CD4-positive, alpha-beta T cell (primary cell): ENCODE measurements at regions of chr4 and their contacts with region 1.

Region 1: DNA sequence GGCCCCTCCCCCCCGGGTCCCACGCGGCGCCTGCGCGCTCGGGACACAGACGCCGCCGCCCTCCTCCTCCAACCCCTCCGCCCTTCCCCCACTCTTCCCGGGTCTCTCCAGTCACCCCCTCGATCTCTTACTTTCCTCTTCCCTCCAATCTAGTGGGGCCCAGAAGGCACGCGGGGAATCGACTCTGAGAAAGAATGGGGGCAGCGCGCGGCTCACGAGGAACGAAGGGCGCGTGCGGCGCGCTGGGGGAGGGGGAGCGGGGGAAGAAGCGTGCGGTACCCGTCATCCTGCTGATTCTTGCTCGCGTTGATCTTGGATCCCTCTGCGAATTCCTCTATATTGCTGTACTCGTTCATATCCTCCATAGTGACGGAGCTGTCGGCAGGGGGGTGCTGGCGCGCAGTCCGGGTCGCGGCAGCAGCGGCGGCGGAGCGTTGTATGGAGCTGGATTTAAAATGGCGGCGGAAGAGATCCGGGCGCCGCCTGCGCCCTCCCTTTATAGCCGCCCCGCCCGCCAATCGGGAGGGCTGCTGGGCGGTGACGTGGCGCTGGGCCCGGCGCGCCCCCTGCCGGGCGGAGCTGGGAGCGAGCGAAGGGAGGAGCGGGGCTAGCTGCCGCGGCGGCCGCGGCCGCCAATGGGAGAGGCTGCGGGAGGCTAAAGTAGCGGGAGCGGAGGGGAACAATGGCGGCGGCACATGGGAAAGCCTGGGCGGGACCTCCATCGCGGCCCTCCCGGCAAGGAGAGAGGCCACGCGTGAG is 1.1 kb downstream of the HNRNPDL start:
- DNase-seq: peak; percentile 87 to 98 (median 94)
- ATAC-seq: peak; percentile 59
- H3K4me3 ChIP-seq: peak overlapping the region; percentile 93
- H3K4me3 Mint-ChIP-seq: peak overlapping the region; percentile 100
- H3K27ac ChIP-seq: peak overlapping the region; percentile 98 to 99
- H3K27ac Mint-ChIP-seq: peak overlapping the region; percentile 99
- H3K4me1 ChIP-seq: peaks cover 36% of the 10 kb centered on the region
- H3K4me1 Mint-ChIP-seq: peaks cover 84% of the 10 kb centered on the region
- H3K27me3 ChIP-seq: no peaks in the 10 kb centered on the region
- H3K27me3 Mint-ChIP-seq: peaks cover 4% of the 10 kb centered on the region
- CTCF ChIP-seq: peak; percentile 91

Region 2: DNA sequence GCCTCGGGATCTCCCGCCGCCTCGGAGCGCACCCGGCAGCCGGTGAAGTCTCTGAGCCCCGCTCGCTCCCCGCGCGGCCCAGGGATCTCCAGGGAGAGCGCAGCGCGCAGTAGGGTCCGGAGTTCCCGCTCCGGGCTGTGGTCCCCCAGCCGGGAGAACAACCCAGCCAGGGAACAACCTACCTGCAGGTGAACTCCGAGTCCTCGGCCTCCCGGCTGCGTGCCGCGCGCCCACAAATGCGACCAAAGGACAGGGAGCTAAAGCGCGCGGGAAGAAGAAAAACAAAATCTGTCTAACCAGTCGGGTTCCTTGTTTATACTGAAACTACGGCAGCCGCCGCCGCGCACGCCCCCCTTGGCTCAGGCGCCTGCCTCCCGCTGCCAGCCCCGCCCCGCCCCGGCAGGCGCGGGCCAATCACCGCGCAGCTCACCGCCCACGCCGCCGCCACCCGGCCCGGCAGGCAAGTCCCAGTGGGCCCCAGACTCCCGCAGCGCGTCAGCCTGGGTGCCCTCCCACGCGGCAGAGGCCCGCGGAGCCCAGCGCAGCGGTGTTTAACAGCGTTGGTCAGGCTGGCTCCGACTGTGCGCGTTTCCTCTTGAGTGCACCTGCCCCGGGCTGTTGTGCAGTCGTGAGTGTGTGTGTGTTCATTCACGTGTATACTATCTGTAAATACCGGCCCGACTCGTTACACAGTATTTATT is 957.4 kb before region 1 on chr4 and contains the start of gene RASGEF1B:
- CTCF ChIA-PET with region 1: no interaction called
- POLR2A ChIA-PET with region 1: interaction called, 14 read pairs
- intact Hi-C with region 1: no loop called
- DNase-seq: peak; percentile 84 to 98 (median 92)
- ATAC-seq: peak; percentile 84
- H3K4me3 ChIP-seq: peak within 1 kb of the TSS; percentile 85
- H3K4me3 Mint-ChIP-seq: peak within 1 kb of the TSS; percentile 94
- H3K27ac ChIP-seq: peak within 1 kb of the TSS; percentile 96
- H3K27ac Mint-ChIP-seq: peak within 1 kb of the TSS; percentile 91
- H3K4me1 ChIP-seq: peaks cover 31% of the 10 kb centered on the region
- H3K4me1 Mint-ChIP-seq: peaks cover 41% of the 10 kb centered on the region
- H3K27me3 ChIP-seq: no peaks in the 10 kb centered on the region
- H3K27me3 Mint-ChIP-seq: no peaks in the 10 kb centered on the region
- CTCF ChIP-seq: no peak
- total RNA-seq, gene RASGEF1B: 69.4 to 73.1 TPM

Region 3: DNA sequence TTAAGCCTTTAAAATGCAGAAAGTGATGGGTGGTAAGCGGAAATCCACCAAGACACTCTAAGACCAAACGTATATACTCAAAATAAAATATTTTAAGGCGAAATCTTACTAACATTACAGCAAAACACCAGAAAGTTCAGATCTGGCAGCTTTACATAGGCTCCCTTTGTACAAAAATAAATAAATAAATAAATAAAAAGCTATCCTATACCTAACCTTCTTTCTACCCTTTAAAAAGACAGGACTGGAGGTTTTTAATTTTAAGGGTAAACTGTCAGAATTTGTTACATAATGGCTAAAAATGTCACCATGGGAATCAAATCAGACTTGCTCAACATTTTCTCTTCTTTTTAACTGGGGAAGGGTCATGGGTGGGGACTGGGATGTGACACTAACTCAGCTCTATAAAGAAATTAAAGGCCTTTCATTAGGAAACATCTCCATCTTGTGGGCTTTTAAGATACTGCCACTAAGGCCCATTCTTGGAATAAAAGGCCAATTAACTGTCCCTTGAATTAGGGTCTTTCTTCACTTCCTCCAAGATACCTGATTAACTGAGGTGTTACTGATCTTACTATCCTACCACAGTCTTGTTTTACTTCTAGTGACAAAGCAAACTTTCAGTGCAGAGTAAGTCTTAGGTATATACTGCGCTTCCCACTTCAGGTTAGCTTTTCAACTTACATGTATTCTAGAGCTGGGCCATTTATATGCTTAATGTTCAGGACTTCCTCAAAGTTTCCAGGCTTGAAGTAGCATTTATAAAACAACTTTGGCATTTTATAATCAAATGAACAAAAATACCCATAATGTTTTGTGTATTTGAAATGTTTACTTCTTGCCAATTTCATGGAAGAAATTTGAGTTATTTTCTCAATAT is 68.6 kb before region 1 on chr4:
- CTCF ChIA-PET with region 1: interaction called, 22 read pairs
- POLR2A ChIA-PET with region 1: interaction called, 53 read pairs
- intact Hi-C with region 1: no loop called
- DNase-seq: peak in 3 of 14 experiments; percentile 50 to 61 (median 61)
- ATAC-seq: peak; percentile 80
- H3K4me3 ChIP-seq: no peak overlapping the region
- H3K4me3 Mint-ChIP-seq: peak overlapping the region; percentile 36
- H3K27ac ChIP-seq: peak overlapping the region in 1 of 2 donors; percentile 7
- H3K27ac Mint-ChIP-seq: peak overlapping the region; percentile 60
- H3K4me1 ChIP-seq: peaks cover 25% of the 10 kb centered on the region
- H3K4me1 Mint-ChIP-seq: peaks cover 96% of the 10 kb centered on the region
- H3K27me3 ChIP-seq: peaks cover 0 to 2% of the 10 kb centered on the region in 2 experiments
- H3K27me3 Mint-ChIP-seq: no peaks in the 10 kb centered on the region
- CTCF ChIP-seq: peak; percentile 72

Region 4: DNA sequence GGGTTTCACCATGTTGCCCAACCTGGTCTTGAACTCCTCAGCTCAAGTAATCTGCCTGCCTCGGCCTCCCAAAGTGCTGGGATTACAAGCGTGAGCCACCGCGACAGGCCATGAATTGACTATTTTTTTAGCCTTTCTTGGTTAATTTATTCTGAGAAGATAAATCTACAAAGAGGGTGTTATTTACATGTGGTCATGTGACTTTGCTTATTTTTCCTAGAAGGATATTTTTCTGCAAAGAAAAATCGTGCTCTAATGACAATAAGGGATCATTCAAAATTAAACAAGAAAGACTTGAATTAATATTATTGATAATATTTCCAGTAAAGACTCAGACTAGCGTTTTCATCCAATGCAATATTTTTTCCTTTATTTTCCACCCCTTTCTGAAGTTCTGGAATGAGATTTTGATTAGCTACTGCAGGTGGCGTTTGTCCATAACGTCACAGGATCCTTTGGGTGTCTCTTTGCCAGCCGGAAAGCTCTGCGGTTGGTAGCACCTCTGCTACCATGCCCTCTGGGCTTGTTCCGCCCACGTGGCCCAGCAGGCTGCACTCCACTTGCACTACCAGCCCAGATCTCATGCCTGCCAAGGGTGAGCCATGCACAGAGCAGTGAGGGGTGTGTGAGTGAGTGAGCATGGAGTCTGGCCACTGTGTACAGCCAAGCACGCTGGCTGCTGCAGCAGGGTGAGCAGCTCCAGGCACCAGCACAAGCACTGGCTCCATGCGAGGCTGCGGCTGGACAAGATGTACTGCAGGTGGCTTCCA is 49.0 kb before region 1 on chr4:
- CTCF ChIA-PET with region 1: interaction called, 24 read pairs
- POLR2A ChIA-PET with region 1: interaction called, 277 read pairs
- intact Hi-C with region 1: no loop called
- DNase-seq: peak in 1 of 14 experiments; percentile 8
- ATAC-seq: no peak
- H3K4me3 ChIP-seq: no peak overlapping the region
- H3K4me3 Mint-ChIP-seq: no peak overlapping the region
- H3K27ac ChIP-seq: no peak overlapping the region
- H3K27ac Mint-ChIP-seq: no peak overlapping the region
- H3K4me1 ChIP-seq: peaks cover 10% of the 10 kb centered on the region
- H3K4me1 Mint-ChIP-seq: peaks cover 35% of the 10 kb centered on the region
- H3K27me3 ChIP-seq: no peaks in the 10 kb centered on the region
- H3K27me3 Mint-ChIP-seq: no peaks in the 10 kb centered on the region
- CTCF ChIP-seq: no peak

Region 5: DNA sequence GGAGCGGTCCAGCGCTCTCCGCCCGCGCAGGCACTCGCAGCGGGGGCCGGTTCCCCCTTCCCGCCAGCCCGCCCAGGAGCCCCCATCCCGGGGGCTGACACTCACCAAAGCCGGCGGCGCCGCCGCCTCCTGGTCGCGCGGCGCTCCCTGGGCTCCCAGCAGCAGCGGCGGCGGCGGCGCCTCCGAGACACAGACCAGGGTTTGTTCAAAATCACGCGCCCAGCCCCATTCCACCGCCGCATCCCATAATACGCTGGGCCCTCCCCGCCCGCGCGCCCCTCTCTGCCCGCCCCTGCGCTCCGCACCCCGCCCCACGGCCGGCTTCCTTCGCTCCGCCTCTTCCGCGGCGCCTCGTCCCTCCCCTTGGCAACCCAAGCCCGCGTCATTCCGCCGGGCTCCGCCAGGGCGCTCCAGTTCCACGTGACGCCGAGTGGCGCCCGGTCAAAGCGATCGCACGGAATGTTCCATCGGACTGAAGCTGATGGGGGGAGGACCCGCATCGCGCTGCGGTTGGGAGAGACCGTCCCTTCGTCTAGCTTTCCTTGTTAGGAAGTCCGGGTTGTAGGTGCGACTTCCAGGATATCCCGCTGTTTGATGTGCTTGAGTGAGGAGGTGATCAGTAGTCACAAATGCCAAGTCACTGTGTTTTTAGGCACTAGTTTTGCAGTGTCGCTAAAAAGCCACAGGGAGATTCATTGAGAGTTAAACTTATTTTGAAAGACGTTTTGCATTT is 583.7 kb after region 1 on chr4:
- CTCF ChIA-PET with region 1: interaction called, 5 read pairs
- POLR2A ChIA-PET with region 1: interaction called, 19 read pairs
- intact Hi-C with region 1: no loop called
- DNase-seq: peak; percentile 94 to 99 (median 96)
- ATAC-seq: peak; percentile 85
- H3K4me3 ChIP-seq: peak overlapping the region; percentile 71
- H3K4me3 Mint-ChIP-seq: peak overlapping the region; percentile 97
- H3K27ac ChIP-seq: peak overlapping the region; percentile 33 to 49
- H3K27ac Mint-ChIP-seq: peak overlapping the region; percentile 91
- H3K4me1 ChIP-seq: peaks cover 26% of the 10 kb centered on the region
- H3K4me1 Mint-ChIP-seq: peaks cover 58% of the 10 kb centered on the region
- H3K27me3 ChIP-seq: no peaks in the 10 kb centered on the region
- H3K27me3 Mint-ChIP-seq: no peaks in the 10 kb centered on the region
- CTCF ChIP-seq: peak; percentile 56

Region 6: GRCh38 chr4:83455281-83456129 is 1026.4 kb after region 1 on chr4 and contains the starts of genes HELQ and MRPS18C:
- CTCF ChIA-PET with region 1: interaction called, 3 read pairs
- POLR2A ChIA-PET with region 1: interaction called, 26 read pairs
- intact Hi-C with region 1: loop called in 1 of 2 experiments (anchors 5 kb)
- DNase-seq: peak; percentile 85 to 99 (median 92)
- ATAC-seq: peak; percentile 86
- H3K4me3 ChIP-seq: peak within 1 kb of the TSS; percentile 88
- H3K4me3 Mint-ChIP-seq: peak within 1 kb of the TSS; percentile 99
- H3K27ac ChIP-seq: peak within 1 kb of the TSS; percentile 99 to 100
- H3K27ac Mint-ChIP-seq: peak within 1 kb of the TSS; percentile 100
- H3K4me1 ChIP-seq: peaks cover 12% of the 10 kb centered on the region
- H3K4me1 Mint-ChIP-seq: peaks cover 70% of the 10 kb centered on the region
- H3K27me3 ChIP-seq: no peaks in the 10 kb centered on the region
- H3K27me3 Mint-ChIP-seq: no peaks in the 10 kb centered on the region
- CTCF ChIP-seq: no peak
- total RNA-seq, gene HELQ: 21.5 to 24.1 TPM
- total RNA-seq, gene MRPS18C: 15.7 to 18.0 TPM